Activated T-helper 1 cell treated with anti-CD3 and anti-CD28 coated beads, Interleukin-12 subunit alpha, Interleukin-12 subunit beta, Interleukin-2, Interleukin-4 antibody, amounts not matched to agents 30 ng/mL and 10 ng/mL and 1 ng/mL, durations not matched to agents 14 hours and 24 hours and 36 hours (primary cell): ENCODE measurements at regions of chr4 and their contacts with region 1.

Region 1: GRCh38 chr4:151887031-151887815 is 126.4 kb upstream of the GATB start:
- DNase-seq: no peak
- H3K4me3 Mint-ChIP-seq: no peak overlapping the region
- H3K27ac Mint-ChIP-seq: no peak overlapping the region
- H3K4me1 Mint-ChIP-seq: peaks cover 21% of the 10 kb centered on the region
- H3K27me3 Mint-ChIP-seq: peaks cover 9% of the 10 kb centered on the region

Region 2: DNA sequence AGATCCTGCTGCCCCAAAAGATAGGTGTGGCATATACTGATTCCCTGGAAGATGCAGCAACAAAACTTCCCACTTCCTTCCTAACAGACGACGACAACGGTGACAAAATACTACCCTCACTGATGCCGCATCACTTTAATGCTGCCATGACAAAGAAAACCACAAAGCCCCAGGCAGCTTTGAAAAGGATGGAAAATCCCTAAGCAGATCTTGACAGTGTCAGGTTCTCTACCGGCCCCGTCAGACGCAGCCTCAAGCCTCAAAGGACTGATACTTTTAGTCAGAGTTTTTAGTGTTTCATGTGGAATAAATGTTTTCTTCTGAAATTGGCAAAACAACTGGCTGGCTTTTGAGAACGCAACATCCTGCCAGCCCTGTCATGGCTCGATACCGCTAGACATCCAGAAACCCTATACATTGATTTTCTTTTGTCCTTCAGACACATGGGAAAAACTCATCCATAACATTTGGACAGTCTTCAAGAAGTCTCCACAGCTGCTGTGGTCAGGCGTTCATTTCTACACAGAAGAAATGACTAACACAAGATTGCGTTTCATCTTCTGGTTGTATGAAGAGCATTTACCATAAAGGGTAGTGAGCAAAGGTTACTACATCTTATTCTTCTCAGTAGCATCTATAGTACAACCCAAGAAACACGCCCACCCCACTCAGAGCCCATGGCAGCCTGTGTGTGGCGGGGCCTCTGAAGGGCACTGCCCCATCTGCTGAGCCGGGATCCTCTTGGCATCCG is 186.5 kb before region 1 on chr4:
- intact Hi-C with region 1: loop called (anchors 5 kb)
- DNase-seq: peak; percentile 9
- H3K4me3 Mint-ChIP-seq: no peak overlapping the region
- H3K27ac Mint-ChIP-seq: peak overlapping the region; percentile 56
- H3K4me1 Mint-ChIP-seq: peaks cover 8% of the 10 kb centered on the region
- H3K27me3 Mint-ChIP-seq: no peaks in the 10 kb centered on the region

Region 3: GRCh38 chr4:151801547-151802516 is 85.4 kb before region 1 on chr4:
- intact Hi-C with region 1: loop called (anchors 5 kb)
- DNase-seq: peak; percentile 36
- H3K4me3 Mint-ChIP-seq: no peak overlapping the region
- H3K27ac Mint-ChIP-seq: no peak overlapping the region
- H3K4me1 Mint-ChIP-seq: no peaks in the 10 kb centered on the region
- H3K27me3 Mint-ChIP-seq: peaks cover 3% of the 10 kb centered on the region

Region 4: DNA sequence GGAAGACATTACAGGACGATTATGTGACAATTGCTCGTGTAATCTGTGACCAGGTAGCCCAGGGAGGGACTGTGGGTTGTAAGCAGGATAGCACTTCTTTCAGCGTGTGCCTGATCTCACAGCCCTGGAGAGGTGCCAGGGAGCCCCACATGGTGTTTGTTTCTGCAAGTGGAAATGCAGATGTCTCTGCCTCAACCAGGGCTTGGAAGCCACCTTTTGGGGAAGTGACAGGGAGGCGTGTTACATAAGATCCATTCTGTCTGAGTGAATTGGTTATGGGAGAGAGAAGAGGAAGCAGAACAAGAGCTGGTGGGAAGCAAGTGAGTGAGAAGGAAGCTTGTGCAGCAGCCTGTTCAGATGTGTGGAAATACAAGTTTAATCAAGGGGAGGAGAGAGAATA is 21.9 kb before region 1 on chr4:
- intact Hi-C with region 1: no loop called
- DNase-seq: no peak
- H3K4me3 Mint-ChIP-seq: no peak overlapping the region
- H3K27ac Mint-ChIP-seq: no peak overlapping the region
- H3K4me1 Mint-ChIP-seq: peaks cover 5% of the 10 kb centered on the region
- H3K27me3 Mint-ChIP-seq: peaks cover 20% of the 10 kb centered on the region

Region 5: DNA sequence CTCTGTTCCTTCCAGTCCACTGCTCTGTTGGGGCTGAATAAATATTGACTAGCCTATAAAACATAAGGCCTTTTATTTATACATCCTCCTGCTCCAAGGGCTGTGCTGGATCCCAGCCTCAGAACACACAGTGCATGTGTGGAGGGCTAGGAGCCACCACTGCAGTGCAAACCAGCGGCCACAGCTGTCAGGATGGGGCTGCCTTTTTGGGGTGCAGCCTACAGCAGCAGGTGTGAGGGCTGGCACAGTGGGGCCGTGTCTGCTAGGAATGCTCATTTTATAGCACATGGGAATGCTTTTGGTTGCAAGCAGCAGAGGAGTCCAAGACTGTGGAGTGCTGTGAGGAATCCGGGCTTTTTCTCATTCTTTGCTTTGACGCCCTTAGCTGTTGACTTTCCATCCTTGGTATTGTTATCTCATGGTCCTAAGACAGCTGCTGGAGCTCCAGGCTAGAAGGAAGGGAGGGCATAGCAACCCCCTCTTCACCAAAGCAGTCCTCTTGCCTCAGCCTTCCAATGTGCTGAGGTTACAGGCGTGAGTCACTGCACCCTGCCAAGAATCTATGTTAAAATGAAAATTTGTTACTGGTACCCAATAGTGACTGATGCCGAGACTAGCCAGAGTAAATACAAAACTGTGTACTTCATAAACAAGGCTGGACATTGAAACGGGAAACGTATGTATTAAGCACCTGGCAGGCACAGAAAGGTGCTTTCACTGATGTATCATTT is 207.9 kb after region 1 on chr4:
- intact Hi-C with region 1: loop called (anchors 10 kb)
- DNase-seq: no peak
- H3K4me3 Mint-ChIP-seq: no peak overlapping the region
- H3K27ac Mint-ChIP-seq: no peak overlapping the region
- H3K4me1 Mint-ChIP-seq: peaks cover 68% of the 10 kb centered on the region
- H3K27me3 Mint-ChIP-seq: no peaks in the 10 kb centered on the region

Region 6: GRCh38 chr4:152255437-152256011 is 368.3 kb after region 1 on chr4:
- intact Hi-C with region 1: loop called (anchors 2 kb)
- DNase-seq: peak; percentile 70
- H3K4me3 Mint-ChIP-seq: no peak overlapping the region
- H3K27ac Mint-ChIP-seq: no peak overlapping the region
- H3K4me1 Mint-ChIP-seq: no peaks in the 10 kb centered on the region
- H3K27me3 Mint-ChIP-seq: no peaks in the 10 kb centered on the region

Region 7: GRCh38 chr4:152369902-152370295 is 482.7 kb after region 1 on chr4:
- intact Hi-C with region 1: loop called (anchors 10 kb)
- DNase-seq: no peak
- H3K4me3 Mint-ChIP-seq: no peak overlapping the region
- H3K27ac Mint-ChIP-seq: no peak overlapping the region
- H3K4me1 Mint-ChIP-seq: peaks cover 24% of the 10 kb centered on the region
- H3K27me3 Mint-ChIP-seq: no peaks in the 10 kb centered on the region

Region 8: DNA sequence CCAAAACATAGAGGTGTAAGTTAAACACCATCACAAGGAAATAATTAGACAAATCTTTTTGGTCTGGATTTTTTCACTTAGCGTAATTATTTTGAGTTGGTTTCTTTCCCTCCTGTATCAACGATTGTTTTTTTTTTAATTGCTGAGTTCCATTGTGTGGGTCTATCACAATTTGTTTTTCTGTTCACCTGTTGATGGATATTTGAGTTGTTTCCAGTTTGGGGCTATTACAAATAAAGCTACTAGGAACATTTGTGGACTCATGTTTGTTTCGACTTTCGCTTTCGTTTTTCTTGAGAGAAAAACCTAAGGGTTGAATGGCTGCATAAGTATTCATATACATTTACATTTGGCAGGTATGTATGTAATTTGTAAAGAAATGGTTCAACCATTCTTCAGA is 669.1 kb after region 1 on chr4:
- intact Hi-C with region 1: loop called (anchors 1 kb)
- DNase-seq: no peak
- H3K4me3 Mint-ChIP-seq: peak overlapping the region; percentile 41
- H3K27ac Mint-ChIP-seq: peak overlapping the region; percentile 77
- H3K4me1 Mint-ChIP-seq: peaks cover 43% of the 10 kb centered on the region
- H3K27me3 Mint-ChIP-seq: no peaks in the 10 kb centered on the region

Region 9: GRCh38 chr4:152585023-152585441 is 697.8 kb after region 1 on chr4:
- intact Hi-C with region 1: no loop called
- DNase-seq: no peak
- H3K4me3 Mint-ChIP-seq: peak overlapping the region; percentile 11
- H3K27ac Mint-ChIP-seq: peak overlapping the region; percentile 66
- H3K4me1 Mint-ChIP-seq: peaks cover 4% of the 10 kb centered on the region
- H3K27me3 Mint-ChIP-seq: peaks cover 8% of the 10 kb centered on the region